Sigmoid colon (tissue), 7 donors: ENCODE measurements at regions of chr12 and their contacts with region 1.

Region 1: DNA sequence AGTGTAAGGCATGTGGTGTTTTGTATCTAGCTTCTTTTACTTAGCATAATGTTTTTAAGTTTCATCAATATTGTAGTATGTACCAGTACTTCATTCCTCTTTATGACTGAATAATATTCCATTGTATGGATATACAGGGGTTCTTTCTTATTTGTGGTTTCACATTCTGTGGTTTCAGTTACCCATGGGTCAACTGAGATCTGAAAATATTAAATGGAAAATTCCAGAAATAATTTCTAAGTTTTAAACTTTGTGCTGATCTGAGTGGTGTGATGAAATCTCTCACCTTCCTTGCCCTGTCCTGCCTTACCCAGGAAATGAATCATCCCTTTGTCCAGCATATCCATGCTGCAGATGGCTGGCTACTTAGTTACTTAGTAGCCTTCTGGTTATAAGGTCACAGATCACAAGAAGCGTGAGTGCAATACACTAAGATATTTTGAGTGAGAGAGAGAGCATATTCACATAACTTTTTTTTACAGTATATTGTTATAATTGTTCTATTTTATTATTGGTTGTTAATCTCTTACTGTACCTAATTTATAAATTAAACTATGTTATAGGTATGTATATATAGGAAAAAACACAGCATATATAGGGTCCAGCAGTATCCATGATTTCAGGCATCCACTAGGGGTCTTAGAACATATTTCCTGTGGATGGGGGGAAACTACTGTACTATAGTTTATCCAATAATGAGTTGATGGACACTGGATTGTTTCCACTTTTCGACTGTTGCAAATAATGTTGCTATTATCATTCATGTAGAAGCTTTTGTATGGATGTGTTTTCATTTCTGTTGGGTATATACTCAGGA is 59.6 kb upstream of the LRTM2 start:
- DNase-seq: no peak
- H3K4me3 ChIP-seq: no peak overlapping the region
- H3K27ac ChIP-seq: no peak overlapping the region
- H3K4me1 ChIP-seq: peaks cover 0 to 50% (median 36%) of the 10 kb centered on the region in 4 donors
- H3K27me3 ChIP-seq: no peaks in the 10 kb centered on the region
- CTCF ChIP-seq: no peak
- EP300 ChIP-seq: no peak
- POLR2A ChIP-seq: no peak

Region 2: GRCh38 chr12:1644534-1645438 is 116.0 kb before region 1 on chr12:
- intact Hi-C with region 1: no loop called
- DNase-seq: peak; percentile 92
- H3K4me3 ChIP-seq: peak overlapping the region in 1 of 4 donors; percentile 8
- H3K27ac ChIP-seq: peak overlapping the region; percentile 42 to 77 (median 64)
- H3K4me1 ChIP-seq: peaks cover 0 to 82% (median 53%) of the 10 kb centered on the region in 4 donors
- H3K27me3 ChIP-seq: no peaks in the 10 kb centered on the region
- CTCF ChIP-seq: no peak
- EP300 ChIP-seq: no peak
- POLR2A ChIP-seq: no peak

Region 3: DNA sequence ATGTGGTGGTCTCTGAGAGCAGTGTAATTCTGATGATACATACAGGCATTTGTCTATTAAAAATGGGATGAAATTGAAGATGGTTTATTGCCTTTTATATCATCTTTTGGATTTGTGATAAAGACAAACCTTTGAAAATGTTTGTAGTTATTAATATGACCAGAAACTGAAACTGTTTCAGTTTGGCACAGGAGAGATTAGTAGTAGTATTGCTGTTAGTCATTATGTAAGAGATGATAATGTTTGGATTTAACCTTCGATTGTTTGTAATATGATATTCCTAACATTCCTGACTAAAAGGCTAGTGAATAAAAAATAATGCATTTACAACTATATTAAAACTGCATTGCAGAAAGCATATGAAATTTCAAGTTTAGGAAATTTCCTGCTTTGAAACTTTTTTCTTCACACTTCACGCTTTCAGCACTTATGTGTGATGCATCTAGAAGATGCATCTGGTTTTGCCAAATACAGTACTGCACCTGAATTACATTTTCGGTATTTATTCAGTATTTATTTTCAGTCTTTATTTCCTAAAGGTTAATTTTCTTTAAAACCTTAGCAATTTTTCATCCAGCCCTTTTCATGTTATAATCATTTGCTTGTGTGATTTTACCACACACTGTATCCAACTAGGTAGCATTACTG is 44.4 kb before region 1 on chr12:
- intact Hi-C with region 1: loop called (anchors 2 kb)
- DNase-seq: no peak
- H3K4me3 ChIP-seq: no peak overlapping the region
- H3K27ac ChIP-seq: peak overlapping the region in 2 of 4 donors; percentile 9 to 27
- H3K4me1 ChIP-seq: peaks cover 0 to 60% (median 31%) of the 10 kb centered on the region in 4 donors
- H3K27me3 ChIP-seq: no peaks in the 10 kb centered on the region
- CTCF ChIP-seq: no peak
- EP300 ChIP-seq: no peak
- POLR2A ChIP-seq: no peak